ENCODE measurements at regions of chr5 and their contacts with region 1.

Region 1: DNA sequence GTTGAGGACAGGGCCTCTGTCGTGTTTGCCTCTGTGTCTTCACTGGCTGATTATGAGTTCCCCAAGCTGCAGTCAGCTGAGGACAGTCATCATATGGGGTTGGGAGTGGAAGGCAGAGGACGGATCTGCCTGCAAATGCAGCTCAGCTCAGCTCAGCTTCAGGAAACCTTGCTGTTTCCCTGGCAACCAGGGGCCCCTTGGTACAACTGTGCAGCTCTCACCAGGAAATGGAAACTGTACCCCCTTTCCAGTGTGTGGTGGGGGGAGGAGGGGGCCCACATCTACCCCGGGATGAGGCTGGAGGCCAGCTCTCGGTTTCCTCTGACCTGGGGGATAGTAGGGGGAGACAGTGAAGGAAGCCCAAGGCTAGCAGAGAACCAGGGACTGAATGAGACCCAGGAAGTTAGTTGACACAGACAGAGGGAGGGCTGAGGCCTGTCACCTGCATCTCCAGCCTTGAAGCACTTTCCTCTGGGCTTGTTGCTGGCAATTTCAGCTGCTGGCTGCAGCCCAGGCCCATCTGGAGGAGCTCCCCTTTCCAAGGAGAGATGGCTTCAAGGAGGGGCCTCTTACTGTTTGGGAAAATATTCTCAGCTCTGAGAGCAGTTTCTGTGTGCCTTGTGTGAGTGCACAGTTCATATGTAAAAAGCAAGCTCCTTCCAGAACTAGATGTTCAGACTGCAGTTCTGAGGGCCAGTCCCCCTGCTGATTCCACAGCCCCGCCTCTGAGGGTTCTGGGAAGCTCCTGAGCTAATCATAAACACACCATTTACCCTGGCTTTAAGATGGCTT is 6.9 kb downstream of the ANXA6 start:
- DNase-seq: peak; percentile 81
- H3K4me3 ChIP-seq: peak overlapping the region; percentile 31
- H3K27ac ChIP-seq: peak overlapping the region; percentile 90
- H3K4me1 ChIP-seq: peaks cover 79% of the 10 kb centered on the region
- CTCF ChIP-seq: no peak

Region 2: DNA sequence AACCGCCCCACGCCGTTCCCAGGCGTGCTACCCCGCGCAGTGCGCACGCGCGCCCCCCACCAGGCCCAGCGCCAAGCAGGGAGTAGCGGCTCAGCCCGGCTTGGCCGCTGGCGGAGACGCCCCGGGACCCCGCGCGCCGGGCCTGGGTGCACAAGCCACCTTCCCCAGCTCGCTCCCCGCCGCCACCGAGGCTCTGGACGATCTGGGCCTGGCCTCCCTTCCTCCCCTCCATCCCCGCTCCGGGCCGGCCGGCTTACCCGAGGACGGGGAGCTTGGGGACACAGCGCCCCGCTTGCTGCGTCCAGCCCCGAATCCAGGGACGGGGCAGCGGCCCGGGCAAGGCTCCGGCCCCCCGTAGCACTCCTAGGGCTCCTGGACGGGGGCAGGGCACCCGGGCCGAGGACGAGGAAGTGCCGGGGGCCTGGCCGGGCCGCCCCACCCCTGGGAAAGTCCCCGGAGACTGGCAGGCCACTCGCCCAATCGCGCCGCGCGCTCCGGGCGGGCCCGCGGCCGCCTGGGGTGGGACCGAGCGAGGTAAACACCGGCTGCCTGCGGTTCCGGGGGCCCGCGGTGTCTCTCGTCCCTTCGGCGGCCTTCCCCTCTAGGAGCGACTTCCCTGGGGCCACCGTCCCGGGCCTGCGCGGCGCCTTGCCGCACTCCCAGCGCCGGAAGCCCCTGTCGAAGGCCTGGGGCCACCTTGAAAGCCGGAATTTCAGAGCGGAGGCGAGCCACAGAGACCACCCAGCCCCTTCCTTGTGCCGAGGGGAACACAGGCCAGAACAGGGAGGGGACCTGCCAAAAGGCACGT is 69.8 kb before region 1 on chr5 and contains the start of gene TNIP1:
- CTCF ChIA-PET with region 1: interaction called, 3 read pairs
- POLR2A ChIA-PET with region 1: interaction called, 11 read pairs
- intact Hi-C with region 1: no loop called
- DNase-seq: peak; percentile 94
- H3K4me3 ChIP-seq: peak within 1 kb of the TSS; percentile 88
- H3K27ac ChIP-seq: peak within 1 kb of the TSS; percentile 75
- H3K4me1 ChIP-seq: peaks cover 58% of the 10 kb centered on the region
- CTCF ChIP-seq: 0 out of 2 replicates have a peak, but pooled peaks have one; percentile 25
- total RNA-seq, gene TNIP1: 51.4 and 55.9 TPM in 2 replicates

Region 3: DNA sequence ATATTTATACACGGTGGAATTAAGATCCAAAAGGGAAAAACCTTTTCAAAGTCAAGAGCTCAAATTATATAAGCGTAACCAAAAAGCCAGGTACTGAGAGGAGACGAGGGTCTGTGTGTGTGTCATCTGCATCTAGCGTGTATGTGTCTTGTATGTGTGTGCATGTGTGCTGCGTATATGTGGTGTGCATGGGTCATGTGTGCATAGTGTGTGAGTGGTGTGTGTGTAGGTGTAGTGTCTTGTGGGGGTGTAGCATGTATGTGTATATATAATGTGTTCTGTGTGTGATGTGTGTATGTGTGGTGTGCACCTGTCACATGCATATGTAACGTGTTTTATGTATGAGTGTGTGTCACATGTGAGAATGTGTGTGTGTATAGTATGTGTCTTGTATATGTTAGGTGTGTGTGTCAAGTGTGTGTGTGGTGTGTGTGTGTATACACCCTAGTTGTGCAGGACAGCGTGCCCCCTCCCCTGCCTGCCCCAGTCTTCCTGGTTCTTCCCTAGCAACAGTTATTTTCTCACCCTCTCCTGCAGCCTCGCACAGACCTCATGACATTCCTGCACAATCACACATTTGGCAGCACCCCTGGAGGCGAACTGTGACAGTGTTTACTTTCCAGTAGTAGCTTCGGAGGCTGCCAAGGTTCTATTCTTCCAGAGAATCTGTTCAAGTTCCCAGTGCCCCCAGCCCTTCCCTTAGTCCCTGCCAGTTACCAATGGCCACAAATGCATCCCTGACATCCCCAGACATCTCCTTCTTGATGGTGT is 42.7 kb before region 1 on chr5:
- CTCF ChIA-PET with region 1: no interaction called
- POLR2A ChIA-PET with region 1: no interaction called
- intact Hi-C with region 1: no loop called
- DNase-seq: no peak
- H3K4me3 ChIP-seq: no peak overlapping the region
- H3K27ac ChIP-seq: no peak overlapping the region
- H3K4me1 ChIP-seq: peaks cover 9% of the 10 kb centered on the region
- CTCF ChIP-seq: no peak

Region 4: GRCh38 chr5:151357801-151358200 is 207.1 kb after region 1 on chr5:
- CTCF ChIA-PET with region 1: no interaction called
- POLR2A ChIA-PET with region 1: no interaction called
- intact Hi-C with region 1: no loop called
- DNase-seq: no peak
- H3K4me3 ChIP-seq: no peak overlapping the region
- H3K27ac ChIP-seq: no peak overlapping the region
- H3K4me1 ChIP-seq: no peaks in the 10 kb centered on the region
- CTCF ChIP-seq: no peak

Region 5: DNA sequence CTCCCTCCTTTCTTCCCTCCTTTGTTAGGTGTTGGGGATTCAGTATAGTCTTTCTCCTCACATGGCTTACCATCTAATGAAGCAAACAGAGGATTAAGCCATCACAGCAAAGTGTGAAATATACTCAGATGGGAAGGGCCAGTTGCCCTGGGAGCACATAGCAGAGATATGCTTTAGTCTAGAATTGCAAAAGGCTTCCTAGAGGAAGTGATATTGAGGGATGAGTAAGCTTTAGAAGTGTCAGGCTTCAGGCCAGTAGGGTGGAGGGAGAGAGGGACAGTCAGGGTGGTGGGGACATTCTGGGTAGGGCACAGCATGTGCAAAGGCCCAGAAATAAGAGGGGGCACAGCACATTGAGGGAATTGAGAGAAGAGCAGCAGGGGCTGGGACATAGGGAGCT is 820.2 kb after region 1 on chr5:
- CTCF ChIA-PET with region 1: no interaction called
- POLR2A ChIA-PET with region 1: no interaction called
- intact Hi-C with region 1: no loop called
- DNase-seq: no peak
- H3K4me3 ChIP-seq: no peak overlapping the region
- H3K27ac ChIP-seq: no peak overlapping the region
- H3K4me1 ChIP-seq: no peaks in the 10 kb centered on the region
- CTCF ChIP-seq: no peak